Astrocyte of the cerebellum (primary cell): ENCODE measurements at regions of chr15 and their contacts with region 1.

Region 1: GRCh38 chr15:67146875-67147381 is 81.5 kb downstream of the SMAD3 start:
- DNase-seq: peak; percentile 64
- H3K4me3 ChIP-seq: no peak overlapping the region
- CTCF ChIP-seq: no peak

Region 2: GRCh38 chr15:67109141-67110034 is 37.5 kb before region 1 on chr15:
- in situ Hi-C with region 1: loop called (anchors 5 kb)
- DNase-seq: peak; percentile 100
- H3K4me3 ChIP-seq: no peak overlapping the region
- CTCF ChIP-seq: no peak

Region 3: DNA sequence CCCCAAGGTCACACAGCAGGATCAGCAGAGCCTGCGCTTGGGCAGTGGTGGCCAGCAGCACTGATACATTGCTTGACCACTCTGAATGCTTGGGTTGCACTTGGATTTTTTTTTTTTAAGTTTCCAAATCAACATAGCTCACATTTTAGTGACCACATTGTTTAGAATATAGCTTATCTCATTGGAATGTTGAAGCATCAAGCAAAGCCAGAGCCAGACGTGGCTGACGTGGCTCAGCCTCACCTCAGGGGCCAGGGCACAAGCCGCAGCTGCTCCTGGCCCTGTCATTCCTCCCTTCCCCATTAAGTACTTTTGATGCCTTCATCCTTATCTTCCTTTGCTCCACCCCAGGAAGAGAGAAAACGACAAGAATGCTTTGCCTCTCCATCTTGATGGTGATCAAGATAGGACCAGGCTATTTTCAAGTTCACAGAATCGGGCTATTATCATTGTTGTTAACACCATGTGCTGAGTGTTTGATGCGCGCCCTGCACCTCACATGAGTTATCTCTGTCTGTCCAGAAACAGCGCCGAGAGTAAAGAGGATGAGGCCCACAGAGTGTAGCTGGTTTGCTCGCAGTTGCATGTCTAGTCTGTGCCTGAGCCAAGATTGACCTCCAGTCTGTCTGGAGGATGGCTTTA is 31.8 kb after region 1 on chr15:
- in situ Hi-C with region 1: no loop called
- DNase-seq: peak; percentile 95
- H3K4me3 ChIP-seq: no peak overlapping the region
- CTCF ChIP-seq: no peak